ENCODE measurements at regions of chr14 and their contacts with region 1.

Region 1: DNA sequence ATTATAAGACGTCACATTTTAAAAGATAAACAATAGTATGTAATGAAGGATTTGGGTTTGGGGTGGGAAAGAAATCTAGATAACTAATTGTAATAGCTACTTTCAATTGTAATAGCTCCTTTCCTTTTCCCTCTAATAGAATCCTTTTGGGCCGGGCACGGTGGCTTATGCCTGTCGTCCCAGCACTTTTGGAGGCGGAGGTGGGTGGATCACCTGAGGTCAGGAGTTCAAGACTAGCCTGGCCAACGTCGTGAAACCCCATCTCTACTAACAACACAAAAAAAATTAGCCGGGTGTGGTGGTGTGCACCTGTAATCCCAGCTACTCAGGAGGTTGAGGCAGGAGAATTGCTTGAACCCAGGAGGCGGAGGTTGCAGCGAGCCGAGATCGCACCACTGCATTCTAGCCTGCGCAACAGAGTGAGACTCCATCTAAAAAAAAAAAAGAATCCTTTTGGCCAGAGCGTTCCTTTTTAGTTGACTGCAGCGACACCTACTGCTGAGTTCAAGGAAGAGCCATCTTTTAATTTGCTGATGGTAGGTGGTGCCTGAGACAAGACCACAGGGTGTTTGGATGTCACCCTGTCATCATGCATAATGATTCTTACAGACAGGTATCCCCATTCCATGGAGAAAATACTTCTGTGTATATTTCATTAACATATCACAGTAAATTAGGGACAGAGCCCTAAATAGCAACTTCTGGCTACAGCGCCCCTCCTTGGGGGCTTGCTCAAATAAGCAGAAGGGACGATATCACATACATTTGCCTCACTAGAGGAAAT is 79.5 kb downstream of the ARMH4 start:
- DNase-seq: peak in 1 of 2 experiments; percentile 65
- H3K4me3 ChIP-seq: no peak overlapping the region
- H3K27ac ChIP-seq: no peak overlapping the region
- H3K4me1 ChIP-seq: no peaks in the 10 kb centered on the region
- H3K27me3 ChIP-seq: no peaks in the 10 kb centered on the region
- CTCF ChIP-seq: peak; percentile 14 to 76 (median 73)
- EP300 ChIP-seq: no peak
- POLR2A ChIP-seq: no peak
- RAD21 ChIP-seq: peak; percentile 86

Region 2: GRCh38 chr14:58027909-58028308 is 44.6 kb before region 1 on chr14:
- CTCF ChIA-PET with region 1: interaction called, 12 read pairs
- POLR2A ChIA-PET with region 1: no interaction called
- DNase-seq: no peak
- H3K4me3 ChIP-seq: no peak overlapping the region
- H3K27ac ChIP-seq: no peak overlapping the region
- H3K4me1 ChIP-seq: 0 out of 7 replicates have a peak, but pooled peaks cover 0 to 2% (median 0%) of the 10 kb centered on the region in 4 experiments
- H3K27me3 ChIP-seq: no peaks in the 10 kb centered on the region
- CTCF ChIP-seq: no peak
- EP300 ChIP-seq: no peak
- POLR2A ChIP-seq: no peak
- RAD21 ChIP-seq: no peak

Region 3: DNA sequence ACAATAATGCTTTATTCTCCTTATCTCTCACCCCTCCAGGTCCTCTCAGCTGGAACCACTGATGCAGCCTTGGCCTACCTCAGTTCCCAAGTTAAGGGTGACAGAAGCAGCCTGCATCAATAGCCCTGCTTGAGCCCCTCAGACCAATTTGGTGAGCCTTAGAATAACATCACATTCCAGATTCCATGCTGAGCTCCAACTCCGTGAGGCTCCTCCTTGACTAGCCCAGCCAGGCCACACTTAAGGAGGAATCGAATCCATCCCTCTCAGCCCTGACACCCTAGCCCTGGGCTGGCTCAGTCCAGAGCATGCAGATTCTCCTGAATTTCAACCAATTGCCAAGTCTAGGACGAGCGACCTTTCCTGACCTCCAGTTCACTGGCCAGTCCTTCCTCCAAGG is 11.6 kb before region 1 on chr14:
- CTCF ChIA-PET with region 1: interaction called, 28 read pairs
- POLR2A ChIA-PET with region 1: no interaction called
- DNase-seq: no peak
- H3K4me3 ChIP-seq: no peak overlapping the region
- H3K27ac ChIP-seq: no peak overlapping the region
- H3K4me1 ChIP-seq: peaks cover 0 to 6% (median 3%) of the 10 kb centered on the region in 4 experiments; a peak in 3 of 7 replicates
- H3K27me3 ChIP-seq: no peaks in the 10 kb centered on the region; a peak in 1 of 7 replicates
- CTCF ChIP-seq: no peak
- EP300 ChIP-seq: no peak
- POLR2A ChIP-seq: no peak
- RAD21 ChIP-seq: no peak

Region 4: DNA sequence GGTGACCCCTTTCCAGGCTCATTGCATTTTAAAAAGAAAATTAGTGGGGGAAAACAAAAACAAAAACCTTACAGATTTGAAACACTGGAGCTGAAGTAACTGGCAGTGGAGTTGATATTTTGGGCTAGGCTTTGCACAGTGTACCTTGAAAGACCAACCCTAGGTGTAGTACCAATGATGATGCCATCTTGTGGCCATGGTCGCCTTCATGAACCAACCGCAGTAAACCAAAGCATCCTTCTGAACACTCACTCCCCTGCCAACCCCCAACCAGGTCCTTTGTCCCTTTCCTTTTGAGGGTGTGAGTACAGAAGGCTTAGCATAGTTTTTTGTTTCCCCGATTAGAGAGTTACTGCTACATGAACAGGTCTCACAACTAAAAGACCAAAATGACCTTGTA is 329.1 kb after region 1 on chr14:
- CTCF ChIA-PET with region 1: no interaction called
- POLR2A ChIA-PET with region 1: no interaction called
- DNase-seq: no peak
- H3K4me3 ChIP-seq: no peak overlapping the region
- H3K27ac ChIP-seq: no peak overlapping the region
- H3K4me1 ChIP-seq: peaks cover 0 to 14% (median 4%) of the 10 kb centered on the region in 4 experiments; a peak in 4 of 7 replicates
- H3K27me3 ChIP-seq: peaks cover 0 to 8% (median 3%) of the 10 kb centered on the region in 4 experiments; a peak in 5 of 7 replicates
- CTCF ChIP-seq: peak in 1 of 3 experiments; percentile 25; a peak in 1 of 4 replicates
- EP300 ChIP-seq: no peak
- POLR2A ChIP-seq: no peak
- RAD21 ChIP-seq: peak in 1 of 2 experiments; percentile 19; a peak in 1 of 4 replicates

Measured in H1 (cell line).